ENCODE measurements at regions of chr3 and their contacts with region 1.

Region 1: DNA sequence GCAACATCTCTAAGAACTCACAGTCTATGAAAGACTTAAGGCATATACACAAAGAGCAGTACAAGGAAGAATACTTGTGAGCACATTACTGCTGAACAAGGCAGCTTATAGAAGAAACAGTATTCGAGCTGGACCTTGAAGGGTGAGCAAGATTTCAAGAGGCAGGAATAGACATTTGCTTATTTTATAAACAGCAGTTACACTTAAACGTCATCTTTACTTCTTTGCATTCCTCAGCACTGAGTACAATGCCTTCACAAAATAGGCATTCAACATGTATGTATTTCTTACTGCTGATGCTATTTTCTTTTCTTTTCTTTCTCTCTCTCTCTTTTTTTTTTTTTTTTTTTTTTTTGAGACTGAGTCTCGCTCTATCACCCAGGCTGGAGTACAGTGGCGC is 205.8 kb downstream of the ZIC4 start:
- DNase-seq: no peak
- ATAC-seq: no peak
- H3K4me3 Mint-ChIP-seq: no peak overlapping the region
- H3K27ac Mint-ChIP-seq: no peak overlapping the region
- H3K4me1 Mint-ChIP-seq: no peaks in the 10 kb centered on the region
- H3K27me3 Mint-ChIP-seq: no peaks in the 10 kb centered on the region
- CTCF ChIP-seq: no peak

Region 2: GRCh38 chr3:147257944-147258343 is 57.4 kb after region 1 on chr3:
- CTCF ChIA-PET with region 1: no interaction called
- POLR2A ChIA-PET with region 1: interaction called, 10 read pairs
- DNase-seq: no peak
- ATAC-seq: no peak
- H3K4me3 Mint-ChIP-seq: no peak overlapping the region
- H3K27ac Mint-ChIP-seq: no peak overlapping the region
- H3K4me1 Mint-ChIP-seq: peaks cover 3% of the 10 kb centered on the region; the same call in 1 of the 2 replicates
- H3K27me3 Mint-ChIP-seq: no peaks in the 10 kb centered on the region
- CTCF ChIP-seq: no peak

Measured in WTC11 (cell line).